ENCODE measurements at regions of chr1 and their contacts with region 1.

Region 1: DNA sequence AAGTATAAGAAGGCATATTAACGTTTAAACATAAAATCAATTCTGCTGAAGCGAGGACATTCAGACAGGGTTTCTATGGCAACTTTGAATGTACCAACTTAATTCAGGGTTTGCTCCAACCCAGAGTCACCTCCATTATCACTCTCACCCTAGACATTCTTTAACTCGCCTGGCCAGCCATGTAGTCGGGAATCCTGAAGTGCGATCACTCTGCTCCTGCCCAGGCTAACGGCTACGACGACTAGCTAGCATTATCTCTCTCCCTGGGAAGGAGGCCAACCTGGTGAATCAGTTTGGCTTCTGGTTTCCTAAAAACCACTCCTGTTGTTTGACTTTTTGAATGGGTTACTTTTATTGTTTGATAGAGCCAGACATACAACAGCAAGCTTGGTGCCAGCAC is 38.9 kb upstream of the ZBTB18 start:
- DNase-seq: no peak
- H3K4me3 ChIP-seq: no peak overlapping the region
- H3K27ac ChIP-seq: no peak overlapping the region
- H3K4me1 ChIP-seq: peaks cover 0 to 3% (median 0%) of the 10 kb centered on the region in 4 donors
- H3K27me3 ChIP-seq: no peaks in the 10 kb centered on the region
- CTCF ChIP-seq: no peak
- EP300 ChIP-seq: no peak
- POLR2A ChIP-seq: no peak

Region 2: DNA sequence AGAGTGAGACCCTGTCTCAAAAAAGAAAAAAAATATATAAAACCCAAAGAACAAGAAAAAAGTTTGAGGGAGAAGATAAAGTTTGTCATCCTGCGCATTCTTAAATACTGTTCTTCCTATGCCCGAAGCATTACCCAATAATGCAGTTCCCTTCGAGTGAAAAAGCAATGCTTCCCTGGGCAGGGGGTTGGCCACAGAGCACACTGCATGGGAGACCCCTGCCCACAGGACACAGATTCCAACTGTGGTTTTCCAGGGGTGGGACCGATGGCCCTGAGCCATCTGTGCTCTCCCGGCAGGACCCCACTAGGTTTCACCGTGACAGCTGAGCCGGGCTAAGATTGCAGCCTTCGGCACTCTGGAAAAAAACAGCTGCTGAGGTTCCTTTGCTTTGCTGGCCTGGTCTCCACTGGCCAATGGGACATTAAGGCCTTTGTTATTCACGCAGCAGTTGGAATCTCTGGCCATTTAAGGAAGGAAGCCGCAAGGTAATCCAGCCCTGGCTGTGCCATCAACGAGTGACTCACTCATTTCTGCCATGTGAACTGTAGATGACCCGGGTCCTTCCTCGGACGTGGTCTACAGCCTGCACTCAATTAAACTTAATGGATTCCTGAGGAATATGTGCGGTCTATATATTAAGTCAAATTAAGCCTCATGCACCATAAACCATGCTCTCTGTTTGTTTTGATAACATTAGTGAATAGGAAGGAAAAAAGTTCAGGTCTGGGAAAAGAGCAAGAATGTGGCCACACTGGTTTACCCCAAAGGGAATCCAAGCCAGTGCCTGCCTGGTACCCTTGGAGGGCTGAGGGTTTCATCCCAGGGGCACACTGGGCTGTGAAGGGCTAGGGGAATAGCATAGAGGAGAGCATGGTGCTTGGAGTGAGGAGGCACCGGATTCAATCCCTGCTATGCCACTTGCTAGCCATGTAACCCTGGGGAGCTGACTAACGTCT is 202.1 kb after region 1 on chr1:
- in situ Hi-C with region 1: loop called in 1 of 4 experiments (anchors 25 kb)
- intact Hi-C with region 1: no loop called
- DNase-seq: peak; percentile 10
- H3K4me3 ChIP-seq: no peak overlapping the region
- H3K27ac ChIP-seq: peak overlapping the region; percentile 25 to 50 (median 38)
- H3K4me1 ChIP-seq: peaks cover 0 to 7% (median 5%) of the 10 kb centered on the region in 4 donors
- H3K27me3 ChIP-seq: no peaks in the 10 kb centered on the region
- CTCF ChIP-seq: no peak
- EP300 ChIP-seq: no peak
- POLR2A ChIP-seq: no peak